Heart right ventricle (tissue), 16 donors: ENCODE measurements at regions of chrX and their contacts with region 1.

Region 1: GRCh38 chrX:149962859-149963757 is 24.8 kb upstream of the EOLA2 start:
- DNase-seq: peak in 1 of 2 donors; percentile 42
- ATAC-seq: peak; percentile 79 to 94 (median 88)
- H3K4me3 ChIP-seq: no peak overlapping the region
- H3K27ac ChIP-seq: no peak overlapping the region
- H3K4me1 ChIP-seq: peaks cover 0 to 9% (median 0%) of the 10 kb centered on the region in 9 donors
- H3K27me3 ChIP-seq: no peaks in the 10 kb centered on the region
- CTCF ChIP-seq: peak in 8 of 9 donors; percentile 18 to 76 (median 69)

Region 2: DNA sequence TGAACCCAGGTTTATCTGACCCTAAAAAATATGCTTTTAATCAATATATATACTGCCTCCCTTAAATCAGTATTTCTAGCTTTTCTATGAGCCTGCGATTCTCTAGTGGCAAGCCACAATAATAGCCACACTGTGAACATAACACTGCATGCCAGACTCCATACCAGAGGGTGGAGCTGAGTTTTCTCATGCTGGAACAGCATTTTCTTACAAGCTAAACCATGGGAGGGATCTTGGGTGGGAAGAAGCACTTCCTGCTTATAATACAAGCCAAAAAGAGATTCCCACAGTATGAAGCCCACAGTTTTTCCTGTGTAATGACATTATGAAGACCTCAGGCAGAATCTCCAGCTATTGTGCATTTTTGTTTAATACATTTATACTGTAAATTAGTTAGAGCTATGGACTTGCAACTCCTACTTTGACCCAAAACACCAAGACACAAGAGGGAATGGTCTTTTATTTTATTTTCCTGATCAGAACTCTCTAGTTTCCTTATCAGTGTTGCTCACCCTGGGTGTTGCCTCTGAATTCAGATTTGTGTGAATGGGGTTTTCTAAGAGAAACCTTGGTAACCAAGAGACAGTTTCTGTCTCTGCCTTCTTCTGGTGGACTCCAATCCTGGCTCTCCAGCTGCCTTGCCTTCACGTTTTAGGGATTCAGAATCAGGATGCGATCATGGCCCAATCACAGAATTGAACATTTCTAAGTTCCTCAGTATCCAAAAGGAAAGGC is 49.7 kb after region 1 on chrX:
- intact Hi-C with region 1: no loop called
- DNase-seq: no peak
- ATAC-seq: peak in 3 of 8 donors; percentile 52 to 64 (median 64)
- H3K4me3 ChIP-seq: no peak overlapping the region
- H3K27ac ChIP-seq: peak overlapping the region in 4 of 10 donors; percentile 29 to 39 (median 36)
- H3K4me1 ChIP-seq: peaks cover 0 to 12% (median 0%) of the 10 kb centered on the region in 9 donors
- H3K27me3 ChIP-seq: no peaks in the 10 kb centered on the region
- CTCF ChIP-seq: no peak

Region 3: DNA sequence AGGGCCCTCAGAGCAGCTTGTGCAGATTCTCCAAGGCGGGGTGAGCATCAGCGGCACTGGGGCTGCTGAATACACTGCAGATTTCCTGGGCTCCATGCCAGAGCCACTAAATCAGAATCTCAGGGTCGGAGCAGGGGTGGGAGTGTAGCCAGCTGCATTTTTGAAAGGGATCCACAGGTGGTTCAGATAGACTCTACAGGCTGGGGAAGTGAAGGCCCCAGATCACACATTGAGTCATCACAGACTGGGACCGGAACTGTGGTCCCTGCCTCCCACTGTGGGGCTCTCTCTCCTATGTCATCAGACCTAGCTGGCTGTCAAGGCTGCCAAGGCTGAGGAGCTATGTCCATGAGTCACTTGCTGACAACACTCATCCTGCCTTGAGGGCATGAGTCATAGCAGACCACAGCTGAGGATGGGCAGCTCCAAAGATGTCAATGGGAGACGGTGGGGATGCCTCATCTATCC is 237.7 kb after region 1 on chrX:
- intact Hi-C with region 1: loop called in 2 of 10 experiments (anchors 10 kb)
- DNase-seq: no peak
- ATAC-seq: peak in 7 of 8 donors; percentile 18 to 90 (median 74)
- H3K4me3 ChIP-seq: no peak overlapping the region
- H3K27ac ChIP-seq: no peak overlapping the region
- H3K4me1 ChIP-seq: peaks cover 0 to 23% (median 0%) of the 10 kb centered on the region in 9 donors
- H3K27me3 ChIP-seq: no peaks in the 10 kb centered on the region
- CTCF ChIP-seq: no peak

Region 4: GRCh38 chrX:150365051-150365989 is 402.2 kb after region 1 on chrX:
- intact Hi-C with region 1: loop called in 5 of 10 experiments (anchors 5 to 10 kb)
- DNase-seq: peak; percentile 68 to 78
- ATAC-seq: peak; percentile 62 to 78 (median 70)
- H3K4me3 ChIP-seq: peak overlapping the region; percentile 52 to 73 (median 62)
- H3K27ac ChIP-seq: peak overlapping the region; percentile 34 to 88 (median 82)
- H3K4me1 ChIP-seq: peaks cover 0 to 22% (median 10%) of the 10 kb centered on the region in 9 donors
- H3K27me3 ChIP-seq: peaks cover 0 to 57% (median 0%) of the 10 kb centered on the region in 7 donors
- CTCF ChIP-seq: peak in 8 of 9 donors; percentile 31 to 74 (median 66)

Region 5: DNA sequence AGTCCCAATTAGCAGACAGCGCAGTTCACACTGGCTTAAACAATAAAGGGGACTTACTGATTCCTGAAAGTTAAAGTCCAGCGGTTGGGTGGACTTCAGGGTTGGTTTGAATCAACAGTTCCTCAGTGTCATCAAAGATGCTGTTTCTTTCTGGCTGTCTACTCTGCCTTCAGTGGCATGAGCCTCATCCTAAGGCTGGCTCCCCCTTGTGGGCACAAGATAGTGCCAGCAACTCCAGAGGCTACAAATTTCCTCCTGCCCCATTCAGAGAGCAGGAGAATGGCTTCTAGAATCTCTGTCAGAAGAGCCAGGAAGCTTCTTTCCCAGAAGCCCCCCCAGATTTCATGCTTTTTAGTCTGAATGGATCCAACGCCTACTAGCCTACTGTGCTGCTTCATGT is 522.9 kb after region 1 on chrX:
- intact Hi-C with region 1: loop called in 4 of 10 experiments (anchors 5 to 10 kb)
- DNase-seq: peak; percentile 25 to 37
- ATAC-seq: peak in 7 of 8 donors; percentile 37 to 73 (median 63)
- H3K4me3 ChIP-seq: no peak overlapping the region
- H3K27ac ChIP-seq: no peak overlapping the region
- H3K4me1 ChIP-seq: no peaks in the 10 kb centered on the region
- H3K27me3 ChIP-seq: peaks cover 0 to 3% (median 0%) of the 10 kb centered on the region in 7 donors
- CTCF ChIP-seq: peak; percentile 25 to 68 (median 62)

Region 6: GRCh38 chrX:150575416-150575808 is 612.3 kb after region 1 on chrX:
- intact Hi-C with region 1: loop called in 1 of 10 experiments (anchors 10 kb)
- DNase-seq: no peak
- ATAC-seq: no peak
- H3K4me3 ChIP-seq: peak overlapping the region in 1 of 10 donors; percentile 22
- H3K27ac ChIP-seq: peak overlapping the region in 1 of 10 donors; percentile 63
- H3K4me1 ChIP-seq: peaks cover 0 to 56% (median 15%) of the 10 kb centered on the region in 9 donors
- H3K27me3 ChIP-seq: no peaks in the 10 kb centered on the region
- CTCF ChIP-seq: no peak

Region 7: DNA sequence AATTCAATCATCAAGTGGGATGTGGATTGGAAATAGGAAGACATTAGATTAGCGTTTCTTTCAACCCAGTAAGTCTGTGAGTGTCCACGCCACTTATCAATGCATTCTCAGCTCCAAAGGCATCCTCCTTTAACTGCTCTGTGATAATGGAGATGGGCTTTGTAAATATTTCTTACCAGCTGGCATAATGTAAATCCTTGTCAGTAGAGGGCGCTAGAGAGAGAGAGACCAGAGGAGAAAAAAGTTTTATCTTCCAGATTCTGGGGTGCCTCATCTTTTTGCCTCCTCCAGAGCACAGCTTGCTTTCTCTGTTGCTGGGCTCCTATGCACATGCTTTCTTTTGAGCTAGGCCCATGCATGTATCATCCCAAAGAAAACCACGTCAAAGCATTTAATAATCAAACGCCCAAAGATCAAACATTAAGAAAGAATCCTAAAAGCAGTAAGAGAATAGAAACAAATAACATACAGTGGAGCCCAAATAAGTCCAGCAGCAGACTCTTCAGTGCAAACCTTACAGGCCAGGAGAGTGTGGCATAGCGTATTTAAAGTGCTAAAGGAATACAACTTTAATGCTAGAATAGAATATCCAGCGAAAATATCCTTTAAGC is 720.5 kb after region 1 on chrX:
- intact Hi-C with region 1: loop called in 3 of 10 experiments (anchors 5 to 10 kb)
- DNase-seq: no peak
- ATAC-seq: no peak
- H3K4me3 ChIP-seq: no peak overlapping the region
- H3K27ac ChIP-seq: no peak overlapping the region
- H3K4me1 ChIP-seq: no peaks in the 10 kb centered on the region
- H3K27me3 ChIP-seq: peaks cover 0 to 9% (median 0%) of the 10 kb centered on the region in 7 donors
- CTCF ChIP-seq: peak in 7 of 9 donors; percentile 44 to 62 (median 51)

Region 8: GRCh38 chrX:150715184-150715583 is 752.1 kb after region 1 on chrX:
- intact Hi-C with region 1: loop called in 4 of 10 experiments (anchors 2 to 10 kb)
- DNase-seq: no peak
- ATAC-seq: no peak
- H3K4me3 ChIP-seq: no peak overlapping the region
- H3K27ac ChIP-seq: no peak overlapping the region
- H3K4me1 ChIP-seq: peaks cover 0 to 4% (median 0%) of the 10 kb centered on the region in 9 donors
- H3K27me3 ChIP-seq: peaks cover 0 to 7% (median 0%) of the 10 kb centered on the region in 7 donors
- CTCF ChIP-seq: no peak